Right ventricle myocardium inferior (tissue), 1 donor: ENCODE measurements at regions of chr1 and their contacts with region 1.

Region 1: DNA sequence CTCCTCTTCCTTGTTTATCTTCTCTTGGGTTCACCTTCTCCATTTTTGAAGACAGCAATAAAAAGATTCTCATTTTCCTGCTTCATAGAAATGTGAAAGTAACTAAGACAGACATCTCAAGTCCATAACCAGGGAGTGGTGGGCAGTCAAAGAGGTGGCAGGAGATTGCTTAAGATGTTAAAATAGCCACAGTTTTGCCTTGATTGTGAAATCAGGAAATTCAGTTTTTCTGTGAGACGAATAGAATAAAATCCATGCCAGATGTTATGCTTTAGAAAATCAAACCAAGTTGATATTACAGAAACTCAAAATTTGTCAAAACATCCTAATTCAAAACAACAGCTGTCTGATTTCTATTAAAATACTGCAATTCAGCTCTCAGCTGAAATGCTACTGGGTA is 57.2 kb downstream of the TNN start:
- DNase-seq: no peak
- ATAC-seq: peak; percentile 35

Region 2: DNA sequence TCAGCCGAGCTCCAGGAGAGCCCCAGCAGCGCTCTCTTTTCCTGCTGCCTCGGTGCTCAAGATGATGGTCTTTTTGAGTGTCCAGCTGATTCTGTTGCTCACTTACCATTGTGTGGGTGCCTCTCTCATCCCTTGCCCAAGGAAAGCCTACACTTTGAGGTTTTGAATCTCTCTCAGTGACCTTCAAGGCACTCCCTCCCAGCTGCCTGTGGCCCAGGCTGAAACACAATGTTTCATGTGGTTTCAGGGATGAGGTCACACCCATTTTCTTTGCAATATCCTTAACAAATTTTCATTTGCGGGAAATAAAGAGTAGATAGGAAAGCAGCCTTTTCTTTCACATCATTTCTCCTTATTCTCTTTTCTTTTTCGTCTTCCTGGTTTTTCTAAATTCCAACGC is 89.0 kb before region 1 on chr1:
- intact Hi-C with region 1: loop called (anchors 2 kb)
- DNase-seq: no peak
- ATAC-seq: no peak

Region 3: GRCh38 chr1:175138579-175138978 is 13.7 kb after region 1 on chr1:
- intact Hi-C with region 1: no loop called
- DNase-seq: no peak
- ATAC-seq: no peak